Activated CD8-positive, alpha-beta T cell treated with anti-CD3 and anti-CD28 coated beads, Interleukin-2, amount 10 ng/mL, durations not matched to agents 7 days and 5 days (primary cell): ENCODE measurements at regions of chr10 and their contacts with region 1.

Region 1: GRCh38 chr10:72331601-72332422 is 22.9 kb downstream of the DNAJB12 start:
- DNase-seq: peak; percentile 94
- ATAC-seq: peak; percentile 66
- H3K4me3 Mint-ChIP-seq: peak overlapping the region; percentile 64
- H3K27ac Mint-ChIP-seq: peak overlapping the region; percentile 91
- H3K4me1 Mint-ChIP-seq: peaks cover 95% of the 10 kb centered on the region
- H3K27me3 Mint-ChIP-seq: no peaks in the 10 kb centered on the region

Region 2: GRCh38 chr10:72126184-72126871 is 205.5 kb before region 1 on chr10:
- CTCF ChIA-PET with region 1: interaction called, 65 read pairs
- POLR2A ChIA-PET with region 1: no interaction called
- DNase-seq: no peak
- ATAC-seq: no peak
- H3K4me3 Mint-ChIP-seq: no peak overlapping the region
- H3K27ac Mint-ChIP-seq: no peak overlapping the region
- H3K4me1 Mint-ChIP-seq: peaks cover 25% of the 10 kb centered on the region
- H3K27me3 Mint-ChIP-seq: no peaks in the 10 kb centered on the region

Region 3: DNA sequence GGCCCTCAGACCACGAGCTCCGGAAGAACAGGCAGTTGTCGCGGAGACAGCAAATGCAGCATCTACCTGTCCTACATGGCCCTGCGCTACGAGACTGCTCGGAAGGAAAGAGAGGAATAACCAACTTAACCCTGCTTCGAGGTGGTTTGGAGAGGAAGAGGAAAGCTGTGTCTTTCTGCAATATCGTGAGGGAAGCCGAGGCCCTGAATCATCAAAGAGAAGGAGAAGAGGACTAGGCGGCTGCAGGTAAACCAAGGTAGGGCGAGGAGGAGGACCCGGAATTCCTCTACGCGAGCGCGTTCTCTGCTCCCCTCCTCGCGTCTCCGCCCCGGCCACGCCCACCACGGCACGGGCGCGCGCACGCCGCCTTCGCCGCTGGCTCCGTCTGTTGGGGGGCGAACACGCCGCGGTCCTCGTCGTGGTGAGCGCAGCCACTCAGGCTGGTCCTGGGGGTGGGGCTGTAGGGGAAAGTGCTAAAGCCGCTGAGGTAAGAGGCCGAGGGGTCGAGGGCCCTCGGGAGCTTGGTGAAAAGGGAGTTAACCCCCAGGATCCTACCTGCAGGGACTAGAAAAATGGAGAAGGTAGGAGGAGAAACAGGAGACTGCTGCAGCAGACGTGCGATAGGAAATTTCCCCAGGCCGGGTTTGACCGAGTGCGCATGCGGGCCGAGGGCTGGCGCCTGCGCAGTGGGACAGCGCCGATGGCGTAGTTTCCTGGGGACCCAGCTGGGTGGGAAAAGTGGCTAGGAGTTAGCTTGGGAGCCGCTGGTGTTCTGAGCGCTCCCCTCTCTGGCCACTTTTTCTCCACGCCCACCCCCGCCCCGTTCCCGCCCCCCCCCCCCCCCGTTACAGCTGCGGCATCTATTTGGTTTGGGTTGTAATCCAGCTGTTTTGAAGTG is 115.9 kb before region 1 on chr10 and contains the starts of genes ANAPC16 and ASCC1:
- CTCF ChIA-PET with region 1: interaction called, 22 read pairs
- POLR2A ChIA-PET with region 1: interaction called, 13 read pairs
- DNase-seq: peak; percentile 95
- ATAC-seq: peak; percentile 88
- H3K4me3 Mint-ChIP-seq: peak within 1 kb of the TSS; percentile 96
- H3K27ac Mint-ChIP-seq: peak within 1 kb of the TSS; percentile 96
- H3K4me1 Mint-ChIP-seq: peaks cover 52% of the 10 kb centered on the region
- H3K27me3 Mint-ChIP-seq: no peaks in the 10 kb centered on the region
- total RNA-seq, gene ANAPC16: 72.9 TPM
- total RNA-seq, gene ASCC1: 34.8 to 40.3 TPM

Region 4: DNA sequence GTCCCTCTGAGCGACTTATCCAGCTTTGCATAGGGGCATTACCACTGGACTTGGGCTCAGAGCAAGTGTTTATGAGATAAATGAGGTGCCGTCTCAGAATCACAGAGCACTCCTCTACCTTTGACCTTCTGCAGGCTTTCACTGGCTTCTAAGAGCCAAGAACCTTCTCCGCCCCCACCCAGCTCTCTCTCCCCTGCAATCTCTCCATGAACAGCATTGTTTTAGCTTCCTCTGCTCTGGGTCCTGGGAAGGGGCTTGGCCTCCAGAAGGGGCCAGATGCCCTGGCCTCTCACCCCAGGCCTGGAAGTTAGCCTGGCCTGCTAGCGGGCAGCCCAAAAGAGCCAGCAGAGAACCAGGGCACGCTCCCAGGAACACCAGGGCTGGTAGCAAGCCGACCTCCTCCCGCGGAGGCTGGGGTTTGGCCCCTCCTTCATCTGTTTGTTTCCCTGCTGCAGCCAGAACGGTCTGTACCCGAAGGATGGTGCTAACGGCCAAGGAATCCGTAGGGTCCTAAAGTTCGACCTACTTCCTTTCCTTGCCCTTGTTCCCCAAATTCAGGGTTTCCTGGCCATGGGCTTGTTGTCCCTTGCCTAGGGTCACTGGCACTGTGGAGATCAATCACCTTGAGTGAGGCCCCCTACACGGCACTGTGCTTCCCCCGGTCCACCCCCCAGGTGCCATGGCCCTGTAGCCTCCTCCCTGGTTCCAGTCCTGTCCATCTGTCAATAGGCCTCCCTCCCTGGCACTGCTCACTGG is 76.8 kb before region 1 on chr10:
- CTCF ChIA-PET with region 1: interaction called, 53 read pairs
- POLR2A ChIA-PET with region 1: interaction called, 15 read pairs
- DNase-seq: peak; percentile 73
- ATAC-seq: peak; percentile 79
- H3K4me3 Mint-ChIP-seq: peak overlapping the region; percentile 77
- H3K27ac Mint-ChIP-seq: peak overlapping the region; percentile 95
- H3K4me1 Mint-ChIP-seq: peaks cover 78% of the 10 kb centered on the region
- H3K27me3 Mint-ChIP-seq: no peaks in the 10 kb centered on the region

Region 5: GRCh38 chr10:72292223-72292691 is 39.6 kb before region 1 on chr10:
- CTCF ChIA-PET with region 1: interaction called, 23 read pairs
- POLR2A ChIA-PET with region 1: interaction called, 119 read pairs
- DNase-seq: peak; percentile 55
- ATAC-seq: peak; percentile 27
- H3K4me3 Mint-ChIP-seq: peak overlapping the region; percentile 7
- H3K27ac Mint-ChIP-seq: peak overlapping the region; percentile 84
- H3K4me1 Mint-ChIP-seq: peaks cover 64% of the 10 kb centered on the region
- H3K27me3 Mint-ChIP-seq: no peaks in the 10 kb centered on the region

Region 6: GRCh38 chr10:72308320-72308987 is 23.4 kb before region 1 on chr10:
- CTCF ChIA-PET with region 1: interaction called, 14 read pairs
- POLR2A ChIA-PET with region 1: interaction called, 11 read pairs
- DNase-seq: peak; percentile 53
- ATAC-seq: peak; percentile 53
- H3K4me3 Mint-ChIP-seq: no peak overlapping the region
- H3K27ac Mint-ChIP-seq: peak overlapping the region; percentile 80
- H3K4me1 Mint-ChIP-seq: peaks cover 76% of the 10 kb centered on the region
- H3K27me3 Mint-ChIP-seq: no peaks in the 10 kb centered on the region

Region 7: DNA sequence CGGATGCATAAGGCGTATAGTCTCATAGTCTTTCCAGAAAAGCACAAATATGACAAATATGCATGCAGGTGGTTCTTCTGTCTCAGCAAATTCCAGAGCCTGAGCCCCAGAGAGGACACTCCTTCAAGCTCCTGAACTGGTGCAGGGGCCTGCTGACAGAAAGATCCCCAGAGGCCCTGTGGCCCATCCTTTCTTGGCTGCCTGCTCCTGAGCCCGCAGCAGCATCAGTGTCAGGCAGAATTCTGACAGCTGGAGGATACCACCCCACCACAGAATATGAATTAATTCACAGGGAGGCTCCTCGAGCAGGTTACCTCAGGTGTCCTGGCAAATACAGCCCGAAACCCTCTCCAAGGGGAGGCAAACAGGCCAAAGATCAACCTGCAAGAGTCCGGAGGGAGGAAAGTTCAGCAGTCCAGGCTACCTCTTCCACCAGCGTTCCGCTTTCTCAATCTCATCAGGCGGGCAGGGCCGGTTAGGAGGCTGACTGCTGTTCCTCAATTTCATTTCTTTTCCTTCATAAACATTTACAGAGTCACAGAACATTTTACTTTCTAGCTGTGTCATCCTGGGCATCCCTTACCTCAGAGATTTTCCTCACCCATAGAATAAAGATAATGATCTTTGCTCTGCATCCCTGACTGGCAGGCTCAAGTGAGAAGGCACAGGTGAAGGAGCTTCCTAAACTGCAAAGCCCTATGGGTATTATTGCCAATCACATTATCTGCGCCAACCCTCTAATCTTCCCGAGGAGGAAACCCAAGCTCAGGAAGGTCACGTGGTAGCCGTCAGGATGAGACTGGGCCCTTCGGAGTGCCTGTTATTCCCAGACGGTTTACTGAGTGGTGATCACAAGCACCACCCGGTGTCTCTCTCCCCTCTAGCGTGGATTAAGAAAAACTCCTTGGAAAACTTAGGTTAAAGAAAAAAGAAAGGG is 21.5 kb after region 1 on chr10:
- CTCF ChIA-PET with region 1: interaction called, 32 read pairs
- POLR2A ChIA-PET with region 1: interaction called, 5 read pairs
- DNase-seq: no peak
- ATAC-seq: no peak
- H3K4me3 Mint-ChIP-seq: peak overlapping the region; percentile 96
- H3K27ac Mint-ChIP-seq: peak overlapping the region; percentile 97
- H3K4me1 Mint-ChIP-seq: peaks cover 34% of the 10 kb centered on the region
- H3K27me3 Mint-ChIP-seq: no peaks in the 10 kb centered on the region

Region 8: GRCh38 chr10:72375585-72375984 is 43.8 kb after region 1 on chr10:
- CTCF ChIA-PET with region 1: no interaction called
- POLR2A ChIA-PET with region 1: no interaction called
- DNase-seq: no peak
- ATAC-seq: no peak
- H3K4me3 Mint-ChIP-seq: no peak overlapping the region
- H3K27ac Mint-ChIP-seq: no peak overlapping the region
- H3K4me1 Mint-ChIP-seq: peaks cover 16% of the 10 kb centered on the region
- H3K27me3 Mint-ChIP-seq: no peaks in the 10 kb centered on the region